Panc1 (cell line): ENCODE measurements at regions of chr15 and their contacts with region 1.

Region 1: GRCh38 chr15:59642351-59642750 is 15.0 kb downstream of the GTF2A2 start:
- DNase-seq: no peak
- ATAC-seq: no peak
- H3K4me3 ChIP-seq: no peak overlapping the region
- H3K27ac ChIP-seq: no peak overlapping the region
- H3K4me1 ChIP-seq: no peaks in the 10 kb centered on the region
- H3K27me3 ChIP-seq: no peaks in the 10 kb centered on the region
- CTCF ChIP-seq: no peak; the same call in 1 of the 2 replicates

Region 2: DNA sequence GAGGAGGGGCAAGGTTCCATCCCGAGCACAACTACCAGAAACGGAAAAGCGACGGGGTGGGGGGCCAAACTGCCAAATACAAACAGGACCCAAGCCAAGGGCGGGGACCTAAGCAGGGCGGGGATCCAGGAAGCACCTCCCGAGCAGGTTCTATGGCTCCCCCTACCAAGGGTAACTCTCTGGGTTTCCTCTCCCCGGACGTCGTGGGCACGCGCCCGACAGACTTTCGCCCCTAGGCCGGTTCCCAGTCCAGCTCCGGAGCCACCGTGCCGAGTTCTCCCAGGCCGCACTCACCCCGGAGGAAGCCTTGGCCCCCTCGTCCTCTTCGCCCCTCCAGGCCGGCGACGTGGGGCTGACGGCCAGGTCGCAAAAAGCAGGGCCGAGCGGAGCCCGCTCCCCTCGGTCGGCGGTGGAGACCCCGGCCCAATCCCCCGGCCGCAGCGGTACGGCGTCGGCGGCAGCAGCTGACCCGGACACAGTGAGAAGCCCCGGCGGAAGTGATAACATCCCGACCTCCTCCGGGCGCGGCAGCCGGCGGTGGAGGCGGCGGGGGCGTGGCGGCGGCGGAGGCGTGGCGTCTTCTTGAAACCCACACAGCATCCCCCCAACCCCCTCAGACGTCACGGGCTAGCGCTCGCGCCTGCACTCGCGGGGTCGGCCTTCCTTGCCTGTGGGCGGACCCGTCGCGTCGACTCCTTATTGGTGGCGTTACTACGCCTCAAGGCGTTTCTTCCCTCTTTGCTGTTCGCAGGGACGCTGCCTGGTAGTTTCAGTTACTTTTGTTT is 46.7 kb after region 1 on chr15 and contains the start of gene BNIP2:
- CTCF ChIA-PET with region 1: interaction called, 10 read pairs
- POLR2A ChIA-PET with region 1: no interaction called
- in situ Hi-C with region 1: no loop called
- intact Hi-C with region 1: no loop called
- DNase-seq: peak; percentile 91
- ATAC-seq: peak; percentile 97
- H3K4me3 ChIP-seq: peak within 1 kb of the TSS; percentile 80 to 90
- H3K27ac ChIP-seq: peak within 1 kb of the TSS; percentile 92
- H3K4me1 ChIP-seq: peaks cover 24% of the 10 kb centered on the region
- H3K27me3 ChIP-seq: no peaks in the 10 kb centered on the region
- CTCF ChIP-seq: no peak
- total RNA-seq, gene BNIP2: 70.7 TPM